ENCODE measurements at regions of chr2 and their contacts with region 1.

Region 1: GRCh38 chr2:237572021-237572741 is 5.8 kb downstream of the PRLH start:
- DNase-seq: peak; percentile 96
- H3K4me3 ChIP-seq: peak overlapping the region in 1 of 2 experiments; percentile 17; a peak in 1 of 4 replicates
- H3K27ac ChIP-seq: peak overlapping the region in 1 of 2 experiments; percentile 21; a peak in 2 of 4 replicates
- H3K4me1 ChIP-seq: peaks cover 6 to 16% of the 10 kb centered on the region in 2 experiments; a peak in 3 of 4 replicates
- H3K27me3 ChIP-seq: no peaks in the 10 kb centered on the region
- CTCF ChIP-seq: peak; percentile 98
- EP300 ChIP-seq: no peak
- RAD21 ChIP-seq: peak; percentile 98

Region 2: DNA sequence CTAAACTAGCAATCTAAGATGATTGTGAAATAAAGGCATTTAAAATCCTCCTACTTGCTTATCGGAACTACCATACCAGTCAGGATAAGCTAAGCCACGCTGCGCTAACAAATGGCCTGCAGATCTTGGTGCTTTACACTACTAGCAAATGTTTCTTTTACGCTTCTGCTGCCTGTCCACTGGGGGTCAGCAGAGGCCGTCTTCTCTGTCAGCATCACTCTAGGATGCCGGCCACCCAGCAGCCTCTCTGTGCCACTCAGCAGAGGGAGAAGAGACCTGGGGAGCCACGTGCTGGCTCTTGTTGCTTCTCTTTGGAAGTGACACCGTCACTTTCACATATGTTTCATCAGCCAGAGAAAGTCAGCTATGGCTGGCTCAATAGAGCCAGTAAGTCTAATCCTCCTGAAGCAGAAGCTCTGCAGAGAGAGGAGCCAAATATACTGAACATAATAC is 449.9 kb before region 1 on chr2:
- CTCF ChIA-PET with region 1: interaction called, 27 read pairs
- POLR2A ChIA-PET with region 1: no interaction called
- DNase-seq: peak; percentile 68
- H3K4me3 ChIP-seq: no peak overlapping the region
- H3K27ac ChIP-seq: no peak overlapping the region
- H3K4me1 ChIP-seq: peaks cover 3 to 5% of the 10 kb centered on the region in 2 experiments; a peak in 3 of 4 replicates
- H3K27me3 ChIP-seq: no peaks in the 10 kb centered on the region
- CTCF ChIP-seq: peak; percentile 60
- EP300 ChIP-seq: no peak
- RAD21 ChIP-seq: peak; percentile 81

Region 3: GRCh38 chr2:237421542-237422116 is 150.6 kb before region 1 on chr2:
- CTCF ChIA-PET with region 1: interaction called, 24 read pairs
- POLR2A ChIA-PET with region 1: no interaction called
- DNase-seq: peak; percentile 71
- H3K4me3 ChIP-seq: no peak overlapping the region; a peak in 1 of 4 replicates
- H3K27ac ChIP-seq: peak overlapping the region; percentile 62 to 82
- H3K4me1 ChIP-seq: peaks cover 16 to 18% of the 10 kb centered on the region in 2 experiments; a peak in 2 of 4 replicates
- H3K27me3 ChIP-seq: no peaks in the 10 kb centered on the region
- CTCF ChIP-seq: peak; percentile 88
- EP300 ChIP-seq: peak in 1 of 2 experiments; percentile 56; a peak in 1 of 4 replicates
- RAD21 ChIP-seq: peak; percentile 67

Region 4: GRCh38 chr2:237500681-237501424 is 71.3 kb before region 1 on chr2:
- CTCF ChIA-PET with region 1: interaction called, 15 read pairs
- POLR2A ChIA-PET with region 1: no interaction called
- DNase-seq: peak; percentile 41
- H3K4me3 ChIP-seq: peak overlapping the region in 1 of 2 experiments; percentile 2; a peak in 1 of 4 replicates
- H3K27ac ChIP-seq: peak overlapping the region; percentile 71 to 100
- H3K4me1 ChIP-seq: peaks cover 13 to 29% of the 10 kb centered on the region in 2 experiments; a peak in 3 of 4 replicates
- H3K27me3 ChIP-seq: no peaks in the 10 kb centered on the region
- CTCF ChIP-seq: no peak
- EP300 ChIP-seq: peak; percentile 44 to 99; a peak in 2 of 4 replicates
- RAD21 ChIP-seq: no peak

Region 5: DNA sequence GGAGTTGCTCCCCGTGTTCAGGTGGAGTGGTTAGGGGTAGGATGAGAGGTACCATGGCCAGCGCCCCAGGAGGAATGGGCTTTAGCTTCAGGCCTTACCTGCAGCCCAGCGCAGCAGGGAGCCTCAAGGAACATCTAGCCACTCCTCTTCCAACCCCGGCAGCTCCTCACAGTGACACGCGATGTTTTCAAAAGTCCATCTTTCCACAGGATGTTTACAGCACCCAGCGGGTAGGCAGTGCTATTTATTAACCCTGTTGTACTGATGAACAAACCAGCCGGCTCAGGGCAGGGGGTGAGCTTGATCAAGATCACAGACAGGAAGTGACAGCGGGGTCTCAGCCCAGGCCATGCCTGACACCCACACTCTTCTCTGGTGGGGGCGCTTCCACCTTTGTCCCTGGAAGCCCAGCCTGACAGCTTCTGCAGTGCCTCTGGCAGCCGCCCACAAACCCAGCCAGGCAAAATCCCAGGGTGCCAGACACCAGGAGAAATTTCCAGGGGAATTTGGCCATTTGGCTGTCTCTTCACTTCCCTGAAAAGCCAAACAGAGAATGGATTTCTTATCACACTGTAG is 24.3 kb before region 1 on chr2:
- CTCF ChIA-PET with region 1: interaction called, 19 read pairs
- POLR2A ChIA-PET with region 1: no interaction called
- DNase-seq: no peak
- H3K4me3 ChIP-seq: no peak overlapping the region
- H3K27ac ChIP-seq: no peak overlapping the region
- H3K4me1 ChIP-seq: peaks cover 0 to 5% of the 10 kb centered on the region in 2 experiments; a peak in 1 of 4 replicates
- H3K27me3 ChIP-seq: no peaks in the 10 kb centered on the region
- CTCF ChIP-seq: no peak
- EP300 ChIP-seq: no peak
- RAD21 ChIP-seq: no peak

Region 6: GRCh38 chr2:237674731-237675276 is 102.6 kb after region 1 on chr2:
- CTCF ChIA-PET with region 1: interaction called, 10 read pairs
- POLR2A ChIA-PET with region 1: no interaction called
- DNase-seq: peak; percentile 90
- H3K4me3 ChIP-seq: no peak overlapping the region; a peak in 1 of 4 replicates
- H3K27ac ChIP-seq: peak overlapping the region; percentile 76 to 92
- H3K4me1 ChIP-seq: peaks cover 35 to 51% of the 10 kb centered on the region in 2 experiments
- H3K27me3 ChIP-seq: no peaks in the 10 kb centered on the region
- CTCF ChIP-seq: no peak
- EP300 ChIP-seq: no peak
- RAD21 ChIP-seq: peak; percentile 36; the same call in 1 of the 2 replicates